ENCODE measurements at regions of chr9 and their contacts with region 1.

Region 1: GRCh38 chr9:90914868-90915483 is 113.4 kb downstream of the SYK start:
- DNase-seq: peak; percentile 89

Region 2: GRCh38 chr9:90972057-90972456 is 57.1 kb after region 1 on chr9:
- intact Hi-C with region 1: no loop called
- DNase-seq: no peak

Region 3: DNA sequence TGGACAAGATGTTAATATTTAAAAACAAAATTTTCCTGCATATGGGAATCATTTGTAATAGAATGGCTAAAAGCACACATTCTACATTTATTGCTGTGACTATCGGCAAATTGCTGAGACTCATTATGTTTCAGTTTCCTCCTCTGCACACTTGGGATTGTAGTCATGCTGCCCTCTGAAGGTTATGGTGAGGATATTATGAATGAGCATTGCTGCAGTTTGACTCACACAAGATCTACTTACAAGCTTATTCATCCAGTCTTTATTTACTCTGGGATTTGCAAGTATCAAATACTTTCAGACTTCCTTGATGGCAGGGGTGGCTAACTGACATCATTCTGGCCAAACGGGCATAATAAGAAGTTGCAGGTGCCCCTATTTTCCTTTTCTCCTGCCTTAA is 518.2 kb after region 1 on chr9:
- intact Hi-C with region 1: loop called (anchors 5 to 10 kb)
- DNase-seq: no peak

Region 4: DNA sequence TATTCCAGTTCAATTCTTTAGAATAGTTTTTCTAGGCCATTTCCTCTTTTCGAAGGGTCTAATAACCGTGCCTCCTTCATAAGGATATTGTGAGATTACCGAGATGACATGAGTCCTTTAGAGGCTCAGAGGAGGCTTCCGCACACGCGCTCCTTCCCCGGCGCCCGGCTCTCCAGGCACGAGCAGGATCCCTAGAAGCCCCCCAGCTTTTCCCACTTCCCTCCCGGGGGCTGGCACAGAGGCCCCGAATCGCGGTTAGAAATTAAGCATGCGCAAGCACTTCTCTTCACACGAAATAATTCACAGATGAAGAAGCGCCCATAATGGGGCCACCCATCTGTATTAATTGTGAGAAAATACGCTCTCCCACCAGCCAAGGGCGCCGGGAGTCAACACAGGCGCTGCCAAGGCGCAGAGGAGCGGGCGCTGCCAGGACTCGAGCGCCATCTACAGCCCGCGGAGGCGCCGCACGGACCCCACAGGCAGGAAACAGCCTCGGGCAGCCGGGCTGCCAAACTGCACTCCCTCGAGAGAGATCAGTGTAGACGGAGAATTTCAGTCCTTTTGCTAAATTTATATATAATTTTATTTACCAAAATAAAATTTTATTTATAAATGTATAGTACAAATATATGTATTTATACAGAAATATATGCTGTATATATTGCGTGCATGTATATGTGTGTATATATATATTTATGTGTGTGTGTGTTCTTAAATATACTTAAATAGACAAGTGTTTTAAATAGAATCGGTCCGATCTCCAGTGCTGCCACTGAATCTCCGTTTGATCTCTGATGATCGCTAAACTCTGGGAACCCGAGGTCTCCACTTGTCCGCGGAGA is 766.7 kb after region 1 on chr9:
- intact Hi-C with region 1: loop called (anchors 5 to 10 kb)
- DNase-seq: peak; percentile 94